Mucosa of descending colon (tissue), 3 donors: ENCODE measurements at regions of chr10 and their contacts with region 1.

Region 1: GRCh38 chr10:114110174-114110972 is 63.6 kb downstream of the CCDC186 start:
- DNase-seq: no peak
- ATAC-seq: peak; percentile 55
- H3K4me3 ChIP-seq: no peak overlapping the region
- H3K4me1 ChIP-seq: no peaks in the 10 kb centered on the region
- CTCF ChIP-seq: no peak

Region 2: DNA sequence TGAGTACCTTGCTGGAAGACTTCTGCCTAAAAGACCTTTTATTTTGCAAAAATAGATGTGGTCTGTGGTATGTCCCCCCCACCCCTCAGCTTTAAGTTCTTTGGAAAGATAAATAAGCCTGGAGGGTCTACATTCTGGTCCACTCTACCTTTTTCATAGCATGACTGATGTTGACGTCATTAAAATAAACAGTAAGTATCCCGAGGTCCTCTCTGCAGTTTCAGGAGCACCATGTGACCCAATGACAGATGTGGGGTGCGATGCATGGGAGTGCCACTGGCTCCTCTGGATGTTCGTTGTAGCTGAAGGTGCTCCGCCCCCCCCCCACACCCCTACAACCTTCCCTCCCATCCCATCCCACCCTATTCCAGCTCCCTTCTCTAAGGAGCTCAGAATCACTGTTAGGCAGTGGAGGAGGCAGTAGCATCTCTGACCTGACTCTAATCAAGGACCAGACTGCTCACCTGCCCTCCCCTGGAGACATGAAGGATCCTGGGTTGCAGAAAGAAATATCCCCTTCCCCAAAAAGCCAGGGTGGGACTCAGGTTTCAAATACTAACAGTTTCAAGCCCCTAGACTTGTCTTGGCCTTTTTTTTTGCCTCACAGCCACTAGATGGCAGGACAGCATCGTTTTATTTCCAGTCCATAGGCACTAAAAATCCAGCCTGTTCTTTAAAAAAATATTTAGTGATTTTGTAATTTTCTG is 405.6 kb before region 1 on chr10:
- intact Hi-C with region 1: loop called (anchors 10 kb)
- DNase-seq: peak in 1 of 3 donors; percentile 41
- ATAC-seq: peak; percentile 48
- H3K4me3 ChIP-seq: no peak overlapping the region
- H3K4me1 ChIP-seq: no peaks in the 10 kb centered on the region
- CTCF ChIP-seq: no peak

Region 3: DNA sequence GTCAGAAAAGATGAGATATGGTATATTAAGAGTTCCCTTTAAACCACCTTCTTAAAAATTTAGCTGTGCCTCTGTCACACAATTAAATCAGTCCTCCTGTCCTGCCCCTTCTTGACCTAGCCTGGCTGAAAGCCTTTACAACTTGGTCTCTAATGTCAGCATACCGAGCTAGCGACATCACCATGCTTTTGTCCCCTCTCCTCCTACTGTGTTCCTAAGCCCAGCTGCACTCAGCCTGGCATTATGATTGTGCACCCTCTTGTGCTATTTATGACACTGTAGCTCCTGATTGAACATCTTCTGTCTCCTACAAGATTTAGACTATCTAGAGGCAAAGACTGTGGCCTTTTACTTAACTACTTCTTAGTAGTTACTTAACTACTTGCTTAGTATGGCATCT is 98.0 kb after region 1 on chr10:
- intact Hi-C with region 1: no loop called
- DNase-seq: no peak
- ATAC-seq: no peak
- H3K4me3 ChIP-seq: no peak overlapping the region
- H3K4me1 ChIP-seq: no peaks in the 10 kb centered on the region
- CTCF ChIP-seq: no peak